ENCODE measurements at regions of chr1 and their contacts with region 1.

Region 1: GRCh38 chr1:150979092-150980056 is 2.7 kb upstream of the ANXA9 start:
- DNase-seq: peak; percentile 72 to 84
- H3K4me3 ChIP-seq: no peak overlapping the region
- H3K27ac ChIP-seq: peak overlapping the region; percentile 77; the same call in 1 of the 2 replicates
- H3K4me1 ChIP-seq: peaks cover 90% of the 10 kb centered on the region
- H3K27me3 ChIP-seq: no peaks in the 10 kb centered on the region
- CTCF ChIP-seq: peak; percentile 99

Region 2: DNA sequence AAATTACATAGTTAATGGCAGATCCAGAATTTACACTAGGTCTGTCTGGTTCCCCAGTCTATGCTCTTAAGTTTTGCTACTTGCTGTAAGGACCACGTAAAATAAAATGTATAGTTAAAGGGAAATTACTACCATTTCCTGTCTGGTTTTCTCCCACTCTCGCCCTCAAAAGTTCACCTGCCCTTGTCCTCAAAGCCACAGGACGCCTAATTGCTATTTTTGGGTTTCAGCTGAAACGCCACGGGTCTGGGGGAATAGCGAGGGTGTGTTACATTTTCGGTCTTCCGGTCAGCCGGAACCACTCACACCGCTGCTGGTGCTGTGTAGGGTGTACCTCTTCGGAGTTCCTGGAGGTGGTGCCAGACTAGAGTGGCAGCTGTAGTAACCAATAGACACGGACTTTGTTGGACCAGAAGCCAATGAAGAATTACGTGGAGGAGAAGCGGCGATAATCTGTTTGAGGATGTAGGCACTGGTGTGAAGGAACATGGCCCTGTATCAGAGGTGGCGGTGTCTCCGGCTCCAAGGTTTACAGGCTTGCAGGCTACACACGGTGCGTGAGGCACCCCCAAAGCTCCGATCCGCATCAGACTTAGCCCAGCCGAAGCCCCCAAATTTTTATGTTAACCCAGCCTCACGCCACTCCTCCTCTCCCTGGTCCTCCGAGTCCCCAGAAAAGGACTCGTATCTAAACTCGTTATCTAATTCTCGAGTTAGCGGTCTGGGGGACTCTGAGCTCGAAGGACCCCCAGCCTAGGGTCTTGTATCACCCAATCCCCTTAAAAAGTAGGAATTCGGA is 492.2 kb before region 1 on chr1 and contains the start of gene TARS2:
- CTCF ChIA-PET with region 1: no interaction called
- POLR2A ChIA-PET with region 1: interaction called, 11 read pairs
- intact Hi-C with region 1: no loop called
- DNase-seq: peak; percentile 95 to 97
- H3K4me3 ChIP-seq: peak within 1 kb of the TSS; percentile 81
- H3K27ac ChIP-seq: peak within 1 kb of the TSS; percentile 18; the same call in 1 of the 2 replicates
- H3K4me1 ChIP-seq: peaks cover 8% of the 10 kb centered on the region; the same call in 1 of the 2 replicates
- H3K27me3 ChIP-seq: no peaks in the 10 kb centered on the region
- CTCF ChIP-seq: peak; percentile 61
- total RNA-seq, gene TARS2: 44.8 and 46.0 TPM in 2 replicates

Region 3: GRCh38 chr1:150567717-150568593 is 411.4 kb before region 1 on chr1:
- CTCF ChIA-PET with region 1: no interaction called
- POLR2A ChIA-PET with region 1: interaction called, 10 read pairs
- intact Hi-C with region 1: loop called (anchors 5 kb)
- DNase-seq: peak; percentile 94 to 98
- H3K4me3 ChIP-seq: peak overlapping the region; percentile 15; the same call in 1 of the 2 replicates
- H3K27ac ChIP-seq: peak overlapping the region; percentile 93
- H3K4me1 ChIP-seq: peaks cover 84% of the 10 kb centered on the region
- H3K27me3 ChIP-seq: no peaks in the 10 kb centered on the region
- CTCF ChIP-seq: no peak

Region 4: DNA sequence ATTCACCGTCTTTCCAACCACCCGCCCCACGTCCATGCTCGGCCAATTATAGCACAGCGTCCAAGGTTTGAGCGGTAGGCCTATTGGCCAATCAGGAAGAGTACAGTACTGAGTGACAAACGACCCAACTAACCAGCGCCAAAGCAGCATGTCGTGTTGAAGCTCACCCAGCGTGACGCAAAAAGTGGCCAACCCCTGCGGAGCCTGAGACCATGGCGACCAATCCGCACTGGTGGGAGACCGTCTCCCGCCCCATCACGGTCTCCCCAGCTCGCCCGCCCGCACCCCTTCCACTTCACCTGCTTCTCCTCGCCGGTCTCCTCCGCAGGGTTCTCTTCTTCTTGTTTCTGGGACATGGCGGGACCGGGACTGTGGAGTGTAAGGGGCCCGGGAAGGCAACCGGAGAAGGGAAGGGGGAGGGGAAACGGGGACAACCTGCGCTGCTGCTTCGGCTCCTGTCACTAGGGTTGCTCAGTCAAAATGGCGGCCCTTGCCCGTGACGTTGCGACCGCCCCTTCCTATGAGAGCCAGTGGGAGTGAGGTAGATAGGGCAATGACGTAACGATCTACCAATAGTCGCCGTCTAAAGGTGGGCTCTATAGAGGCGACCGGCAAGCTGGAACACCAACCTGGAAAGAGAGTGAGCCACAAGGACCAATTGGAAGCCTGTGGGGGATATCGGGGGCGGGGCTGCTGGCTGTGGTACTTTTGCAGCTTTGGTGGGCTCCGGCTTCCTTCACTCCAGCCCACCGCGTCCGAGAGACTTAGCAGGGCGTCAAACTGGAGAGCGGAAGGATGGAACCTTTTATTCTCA is 350.1 kb before region 1 on chr1 and contains the start of gene ENSA:
- CTCF ChIA-PET with region 1: no interaction called
- POLR2A ChIA-PET with region 1: no interaction called
- intact Hi-C with region 1: loop called (anchors 10 kb)
- DNase-seq: peak; percentile 95 to 97
- H3K4me3 ChIP-seq: peak within 1 kb of the TSS; percentile 96
- H3K27ac ChIP-seq: peak within 1 kb of the TSS; percentile 76
- H3K4me1 ChIP-seq: peaks cover 49% of the 10 kb centered on the region
- H3K27me3 ChIP-seq: no peaks in the 10 kb centered on the region
- CTCF ChIP-seq: no peak
- total RNA-seq, gene ENSA: 229 and 263 TPM in 2 replicates

Region 5: GRCh38 chr1:150778409-150778808 is 201.0 kb before region 1 on chr1:
- CTCF ChIA-PET with region 1: no interaction called
- POLR2A ChIA-PET with region 1: no interaction called
- intact Hi-C with region 1: no loop called
- DNase-seq: no peak
- H3K4me3 ChIP-seq: no peak overlapping the region
- H3K27ac ChIP-seq: no peak overlapping the region
- H3K4me1 ChIP-seq: no peaks in the 10 kb centered on the region
- H3K27me3 ChIP-seq: no peaks in the 10 kb centered on the region
- CTCF ChIP-seq: no peak

Region 6: DNA sequence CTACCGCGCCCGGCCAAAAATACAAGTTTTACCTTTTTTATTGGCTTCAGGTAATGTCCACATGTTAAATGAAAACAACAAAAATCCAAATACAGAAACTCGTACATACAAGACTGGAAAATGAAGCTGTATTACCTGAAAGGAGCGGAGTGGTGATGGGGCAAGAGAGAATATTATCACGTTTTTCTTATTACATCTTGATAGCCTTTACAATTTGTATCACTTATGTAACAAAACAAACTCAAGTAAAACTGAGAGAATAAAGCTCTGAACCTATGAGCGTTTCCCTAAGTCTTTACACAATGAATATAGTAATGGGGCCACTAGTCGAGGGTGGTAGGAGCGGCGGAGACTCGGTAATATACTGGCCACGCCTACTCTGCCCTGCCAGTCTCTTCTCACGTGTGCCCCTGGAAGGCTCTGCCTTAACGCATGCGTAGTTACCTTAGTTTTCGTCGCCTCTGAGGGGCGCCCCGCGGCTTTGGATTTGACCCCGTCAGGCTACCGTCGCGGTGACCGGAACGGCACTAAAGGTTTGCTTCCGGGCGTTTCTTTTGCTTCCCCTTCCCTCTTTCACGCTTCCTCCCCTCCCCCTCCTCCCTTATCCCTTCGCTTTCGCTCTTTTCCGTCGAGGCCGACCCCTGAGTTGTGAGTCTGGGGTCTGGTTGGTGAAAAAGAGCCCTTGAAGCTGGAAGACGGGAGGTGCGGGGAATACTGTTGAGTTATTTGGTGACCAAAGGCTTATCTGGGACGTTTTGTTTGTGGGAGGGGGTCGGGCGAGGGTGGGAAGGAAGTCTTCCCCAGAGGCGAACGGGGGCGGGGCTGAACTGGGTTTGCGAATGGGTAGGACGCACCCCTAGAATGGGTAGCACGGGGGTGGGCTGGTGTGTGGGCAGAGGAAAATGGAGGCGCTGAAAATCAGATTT is 53.3 kb before region 1 on chr1 and contains the start of gene SETDB1:
- CTCF ChIA-PET with region 1: interaction called, 9 read pairs
- POLR2A ChIA-PET with region 1: interaction called, 3 read pairs
- intact Hi-C with region 1: loop called (anchors 2 kb)
- DNase-seq: peak; percentile 91 to 95
- H3K4me3 ChIP-seq: peak within 1 kb of the TSS; percentile 67
- H3K27ac ChIP-seq: peak within 1 kb of the TSS; percentile 79
- H3K4me1 ChIP-seq: peaks cover 14% of the 10 kb centered on the region
- H3K27me3 ChIP-seq: no peaks in the 10 kb centered on the region
- CTCF ChIP-seq: no peak
- total RNA-seq, gene SETDB1: 45.6 and 51.1 TPM in 2 replicates

Region 7: GRCh38 chr1:150995896-150996295 is 16.5 kb after region 1 on chr1:
- CTCF ChIA-PET with region 1: interaction called, 15 read pairs
- POLR2A ChIA-PET with region 1: interaction called, 6 read pairs
- intact Hi-C with region 1: loop called (anchors 1 kb)
- DNase-seq: peak in 1 of 2 experiments; percentile 43
- H3K4me3 ChIP-seq: no peak overlapping the region
- H3K27ac ChIP-seq: no peak overlapping the region
- H3K4me1 ChIP-seq: 0 out of 2 replicates have a peak, but pooled peaks cover 5% of the 10 kb centered on the region
- H3K27me3 ChIP-seq: no peaks in the 10 kb centered on the region
- CTCF ChIP-seq: peak; percentile 97

Region 8: GRCh38 chr1:151059078-151059907 is 79.9 kb after region 1 on chr1 and contains the start of gene CDC42SE1:
- CTCF ChIA-PET with region 1: interaction called, 3 read pairs
- POLR2A ChIA-PET with region 1: interaction called, 5 read pairs
- intact Hi-C with region 1: loop called (anchors 2 kb)
- DNase-seq: peak; percentile 59 to 74
- H3K4me3 ChIP-seq: peak within 1 kb of the TSS; percentile 82
- H3K27ac ChIP-seq: no peak within 1 kb of the TSS
- H3K4me1 ChIP-seq: peaks cover 43% of the 10 kb centered on the region
- H3K27me3 ChIP-seq: no peaks in the 10 kb centered on the region
- CTCF ChIP-seq: peak; percentile 72
- total RNA-seq, gene CDC42SE1: 59.4 and 62.8 TPM in 2 replicates